ENCODE measurements at regions of chr1 and their contacts with region 1.

Region 1: DNA sequence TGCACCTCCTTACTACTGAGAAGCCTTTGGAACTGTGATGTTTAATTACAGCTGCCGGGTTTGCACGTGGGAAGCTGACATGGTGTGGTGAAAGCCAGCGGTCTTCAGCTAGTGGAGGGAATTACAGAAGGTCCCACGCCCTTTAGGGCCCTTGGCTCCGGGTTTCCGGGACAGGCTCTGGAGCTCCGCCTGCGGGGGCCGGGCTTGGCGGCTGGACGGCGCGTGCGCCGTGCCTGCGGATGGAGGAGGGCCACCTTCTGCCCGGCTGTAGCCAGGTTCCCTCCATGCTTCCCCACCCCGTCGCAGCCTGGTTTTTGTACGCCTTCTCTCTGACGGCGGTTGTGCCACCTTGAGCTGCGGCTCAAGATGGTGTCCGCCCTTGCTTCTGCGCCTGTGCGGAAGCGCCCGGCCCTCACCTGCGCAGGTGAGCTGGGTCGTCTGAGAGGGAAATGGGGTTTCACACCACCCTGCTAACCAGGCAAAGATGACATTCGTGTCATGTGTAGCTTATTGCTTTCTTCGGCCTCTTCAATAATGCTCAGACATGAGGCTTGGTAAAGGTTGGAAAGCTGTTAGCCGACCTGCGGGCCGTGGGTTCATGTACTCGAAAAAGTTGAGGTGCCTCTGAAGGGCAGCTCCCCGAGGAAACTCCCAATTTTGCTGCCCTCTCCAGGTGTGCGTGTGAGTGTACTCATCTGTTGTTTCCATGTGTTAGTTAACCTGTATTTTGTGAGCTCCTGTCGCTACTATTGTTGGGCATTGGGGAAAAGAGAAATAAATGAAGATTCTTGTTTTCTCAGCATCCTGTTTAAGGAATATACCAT is 36.6 kb upstream of the OPRD1 start:
- DNase-seq: peak; percentile 76
- ATAC-seq: peak; percentile 89
- H3K4me3 Mint-ChIP-seq: peak overlapping the region; percentile 44
- H3K27ac Mint-ChIP-seq: peak overlapping the region; percentile 6
- H3K4me1 Mint-ChIP-seq: peaks cover 8% of the 10 kb centered on the region
- H3K27me3 Mint-ChIP-seq: no peaks in the 10 kb centered on the region

Region 2: DNA sequence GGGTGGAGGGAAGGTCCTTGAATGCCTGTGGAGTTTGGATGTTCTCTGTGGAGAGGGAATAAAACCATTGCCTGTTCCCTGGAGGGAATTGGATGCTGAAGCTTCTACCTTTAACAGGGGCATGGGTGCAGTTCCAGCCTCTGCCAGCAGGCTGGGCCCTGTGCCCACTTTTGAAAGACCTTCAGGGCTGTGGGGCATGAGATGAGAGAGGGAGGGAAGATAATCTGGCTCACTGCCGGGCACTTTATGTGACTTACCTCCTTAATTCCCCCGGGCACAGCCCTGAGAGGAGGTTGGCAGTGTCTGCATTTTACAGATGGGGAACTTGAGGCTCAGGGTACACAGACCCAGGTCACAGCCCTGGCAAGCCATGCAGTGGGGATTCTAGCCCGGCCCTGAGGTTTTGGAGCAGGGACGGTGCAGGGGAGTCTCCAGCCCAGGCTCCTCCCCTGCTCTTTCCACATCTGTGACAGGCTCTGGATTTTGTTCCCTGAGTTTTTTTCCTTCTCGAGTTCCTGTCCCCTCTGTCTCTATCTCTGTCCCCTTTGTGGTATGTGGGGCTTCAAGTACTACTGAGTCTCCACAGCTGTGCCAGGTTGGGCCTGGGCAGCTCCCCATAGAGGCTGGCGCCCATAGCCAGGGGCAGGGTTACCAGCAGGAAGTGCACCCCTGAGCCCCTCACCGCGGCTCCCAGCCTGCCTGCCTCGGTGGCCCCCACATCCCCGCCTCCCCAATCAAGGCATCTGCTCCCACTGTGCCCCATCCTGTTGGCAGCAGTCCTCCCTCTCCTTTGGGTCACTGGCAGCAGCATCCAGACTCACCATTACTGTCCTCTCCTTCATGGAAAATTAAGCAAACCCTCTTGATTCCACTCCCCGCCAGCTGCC is 917.0 kb before region 1 on chr1:
- CTCF ChIA-PET with region 1: no interaction called
- POLR2A ChIA-PET with region 1: no interaction called
- intact Hi-C with region 1: no loop called
- DNase-seq: peak; percentile 90
- ATAC-seq: peak; percentile 97
- H3K4me3 Mint-ChIP-seq: no peak overlapping the region
- H3K27ac Mint-ChIP-seq: no peak overlapping the region
- H3K4me1 Mint-ChIP-seq: peaks cover 9% of the 10 kb centered on the region
- H3K27me3 Mint-ChIP-seq: no peaks in the 10 kb centered on the region

Region 3: GRCh38 chr1:28792644-28793121 is 17.4 kb after region 1 on chr1:
- CTCF ChIA-PET with region 1: interaction called, 11 read pairs
- POLR2A ChIA-PET with region 1: no interaction called
- intact Hi-C with region 1: no loop called
- DNase-seq: no peak
- ATAC-seq: no peak
- H3K4me3 Mint-ChIP-seq: no peak overlapping the region
- H3K27ac Mint-ChIP-seq: no peak overlapping the region
- H3K4me1 Mint-ChIP-seq: peaks cover 3% of the 10 kb centered on the region
- H3K27me3 Mint-ChIP-seq: no peaks in the 10 kb centered on the region

Region 4: DNA sequence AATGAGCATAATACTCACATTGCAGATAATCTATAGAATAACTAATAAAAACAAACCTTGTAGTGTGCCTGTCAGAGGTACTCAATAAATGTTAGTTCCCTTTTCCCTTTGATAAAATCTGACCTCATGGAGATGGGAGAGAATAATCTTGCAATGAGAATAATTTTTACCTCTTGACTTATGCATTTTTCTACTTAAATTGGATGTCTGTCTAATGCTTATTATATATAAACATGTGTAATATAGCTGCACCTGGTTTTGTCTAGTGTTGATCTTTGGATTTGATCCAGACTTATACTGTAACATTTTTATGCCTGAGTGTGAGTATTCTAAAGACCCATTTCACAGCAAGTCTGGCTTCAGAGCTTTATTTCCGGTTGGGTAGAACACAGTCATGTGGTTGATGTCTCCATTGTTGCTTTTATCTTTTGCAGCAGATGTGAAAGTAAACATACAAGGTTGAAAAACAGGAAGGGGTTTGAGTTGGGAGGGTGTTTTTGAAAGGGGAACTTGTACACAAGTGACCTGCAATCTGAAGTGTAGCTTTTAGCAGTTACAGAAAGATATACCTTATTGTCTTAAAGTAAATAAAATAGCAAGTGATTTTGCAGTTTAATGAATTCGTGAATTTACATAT is 151.4 kb after region 1 on chr1:
- CTCF ChIA-PET with region 1: no interaction called
- POLR2A ChIA-PET with region 1: no interaction called
- intact Hi-C with region 1: no loop called
- DNase-seq: peak; percentile 24
- ATAC-seq: peak; percentile 89
- H3K4me3 Mint-ChIP-seq: peak overlapping the region; percentile 53
- H3K27ac Mint-ChIP-seq: peak overlapping the region; percentile 94
- H3K4me1 Mint-ChIP-seq: peaks cover 56% of the 10 kb centered on the region
- H3K27me3 Mint-ChIP-seq: no peaks in the 10 kb centered on the region